HepG2 (cell line): ENCODE measurements at regions of chr5 and their contacts with region 1.

Region 1: DNA sequence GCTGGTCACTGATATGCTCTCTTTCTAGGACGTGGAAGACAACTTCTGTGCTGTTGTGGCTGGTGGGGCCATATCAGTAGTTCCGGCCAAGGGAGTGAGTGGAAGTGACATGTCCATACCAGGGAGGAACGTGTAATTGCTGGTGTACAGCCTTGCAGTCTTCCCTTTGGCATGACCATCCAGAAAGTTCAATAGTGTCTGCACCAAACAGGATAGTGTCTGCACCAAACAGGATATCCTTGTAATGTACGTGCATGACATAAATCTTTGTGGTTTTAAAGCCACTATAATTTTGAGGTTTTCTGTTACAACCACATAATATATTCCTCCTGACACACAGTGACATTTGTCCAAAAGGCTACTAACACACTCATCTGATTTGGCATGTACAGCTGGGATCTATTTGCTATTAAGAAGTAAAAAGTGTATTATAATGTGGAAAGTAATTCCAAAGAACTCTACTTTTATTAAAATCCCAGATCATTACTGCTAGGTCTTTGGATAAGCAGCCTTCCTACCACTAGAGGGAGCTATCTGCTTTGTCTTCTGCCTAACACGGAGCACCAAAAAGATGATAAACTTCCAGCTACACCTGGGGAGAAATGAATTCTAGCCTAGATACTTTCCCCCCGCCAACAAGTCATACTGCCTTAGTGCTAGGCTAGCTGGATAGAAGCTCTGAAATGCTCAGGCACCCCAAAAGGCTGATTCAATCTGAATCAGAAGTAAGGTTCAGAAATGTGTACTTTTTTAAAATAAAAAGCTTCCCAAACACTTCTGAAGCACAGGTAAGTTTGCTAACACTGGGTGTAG is 52.7 kb downstream of the RNF145 start:
- DNase-seq: peak; percentile 64
- ATAC-seq: peak; percentile 91
- H3K4me3 ChIP-seq: no peak overlapping the region
- H3K27ac ChIP-seq: no peak overlapping the region
- H3K4me1 ChIP-seq: no peaks in the 10 kb centered on the region
- H3K27me3 ChIP-seq: no peaks in the 10 kb centered on the region; a peak in 1 of 5 replicates
- CTCF ChIP-seq: peak; percentile 81
- EP300 ChIP-seq: no peak
- POLR2A ChIP-seq: no peak
- RAD21 ChIP-seq: peak; percentile 70

Region 2: DNA sequence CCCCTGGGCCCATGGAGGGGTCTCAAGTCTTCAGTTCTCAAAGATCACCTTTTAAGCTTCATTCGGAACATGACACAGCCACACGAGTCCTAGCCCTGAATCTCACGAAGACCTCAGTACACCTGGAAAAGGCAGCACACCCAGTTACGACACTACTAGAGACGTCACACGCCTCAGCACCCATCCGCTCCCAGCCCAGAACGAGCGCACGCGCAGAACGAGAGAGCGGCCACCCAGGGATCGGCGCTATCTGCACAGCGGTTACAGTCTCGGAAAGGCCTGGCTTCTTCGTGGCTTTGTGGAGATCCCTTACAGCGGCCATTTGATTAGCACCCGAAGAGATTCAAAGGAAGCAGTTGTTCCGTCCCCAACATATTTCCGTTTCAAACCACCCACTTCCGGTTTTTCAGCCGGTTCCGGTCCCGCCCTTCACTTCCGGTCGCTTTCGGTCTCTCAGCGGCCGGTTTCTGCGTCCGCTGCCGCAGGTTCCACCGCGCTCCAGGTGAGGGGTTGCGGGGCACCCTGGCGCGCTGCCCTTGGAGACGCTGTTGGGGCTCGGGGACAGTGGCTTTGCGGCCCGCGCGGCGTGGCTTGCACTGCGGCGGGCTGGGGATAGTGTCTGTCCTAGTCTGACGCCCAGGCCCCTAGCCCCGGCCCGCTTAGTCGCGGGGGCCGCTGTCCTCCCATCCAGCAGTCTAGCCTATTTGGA is 106.4 kb after region 1 on chr5 and contains the start of gene UBLCP1:
- CTCF ChIA-PET with region 1: no interaction called
- POLR2A ChIA-PET with region 1: no interaction called
- in situ Hi-C with region 1: no loop called
- intact Hi-C with region 1: loop called (anchors 2 kb)
- DNase-seq: peak; percentile 76
- ATAC-seq: peak; percentile 96
- H3K4me3 ChIP-seq: peak within 1 kb of the TSS; percentile 94 to 98 (median 97)
- H3K27ac ChIP-seq: peak within 1 kb of the TSS; percentile 79
- H3K4me1 ChIP-seq: peaks cover 26% of the 10 kb centered on the region
- H3K27me3 ChIP-seq: no peaks in the 10 kb centered on the region; a peak in 1 of 5 replicates
- CTCF ChIP-seq: no peak
- EP300 ChIP-seq: no peak
- POLR2A ChIP-seq: peak; percentile 77 to 78; a peak in 3 of 4 replicates
- RAD21 ChIP-seq: peak; percentile 10; the same call in 1 of the 2 replicates
- total RNA-seq, gene UBLCP1: 12.6 and 20.2 TPM in 2 replicates

Region 3: DNA sequence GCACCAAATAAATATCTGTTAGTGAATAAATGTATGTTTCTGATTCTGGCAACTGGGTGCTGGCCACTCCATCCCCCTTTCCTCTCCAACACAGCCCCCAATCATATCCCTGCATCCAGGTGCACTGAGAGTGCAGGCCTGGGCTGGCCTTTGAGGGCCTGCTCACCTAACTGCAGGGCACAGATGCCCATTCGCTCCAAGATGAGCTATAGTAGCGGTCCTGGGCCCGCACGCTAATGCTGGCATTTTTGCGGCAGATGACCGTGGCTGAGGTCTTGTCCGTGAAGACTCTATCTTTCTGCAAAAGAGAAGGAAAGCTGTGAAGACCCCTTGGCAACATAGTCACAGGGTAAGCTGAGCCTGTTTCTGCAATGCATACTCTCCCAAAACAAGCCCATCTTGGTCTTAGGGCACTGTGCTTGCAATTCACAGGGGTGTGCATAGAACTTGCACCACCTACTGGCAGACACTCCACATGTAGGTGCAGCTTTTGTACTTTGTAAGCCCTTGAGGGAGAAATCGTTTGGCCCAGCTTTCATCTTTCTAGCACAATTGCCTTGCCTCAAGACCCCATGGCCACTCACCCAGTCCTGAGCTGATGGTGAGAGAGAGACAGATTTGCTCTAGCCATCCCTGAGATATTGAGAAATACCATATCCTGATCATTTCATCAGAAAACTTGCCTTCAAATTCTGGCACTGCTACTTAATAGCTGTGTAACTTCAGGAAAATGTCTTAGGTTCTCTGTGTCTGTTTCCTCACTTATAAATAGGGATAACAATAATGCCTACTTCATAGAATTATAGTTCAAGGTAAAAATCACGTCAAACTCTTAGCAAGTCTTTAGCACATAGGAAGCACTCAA is 160.1 kb after region 1 on chr5:
- CTCF ChIA-PET with region 1: interaction called, 27 read pairs
- POLR2A ChIA-PET with region 1: interaction called, 3 read pairs
- in situ Hi-C with region 1: loop called (anchors 5 kb)
- intact Hi-C with region 1: loop called (anchors 1 kb)
- DNase-seq: peak; percentile 40
- ATAC-seq: peak; percentile 93
- H3K4me3 ChIP-seq: no peak overlapping the region
- H3K27ac ChIP-seq: no peak overlapping the region
- H3K4me1 ChIP-seq: no peaks in the 10 kb centered on the region
- H3K27me3 ChIP-seq: peaks cover 0 to 7% of the 10 kb centered on the region in 2 experiments; a peak in 3 of 5 replicates
- CTCF ChIP-seq: peak; percentile 84
- EP300 ChIP-seq: no peak
- POLR2A ChIP-seq: no peak
- RAD21 ChIP-seq: no peak; the same call in 1 of the 2 replicates

Region 4: GRCh38 chr5:159444441-159445082 is 287.9 kb after region 1 on chr5:
- CTCF ChIA-PET with region 1: no interaction called
- POLR2A ChIA-PET with region 1: no interaction called
- in situ Hi-C with region 1: no loop called
- intact Hi-C with region 1: loop called (anchors 5 kb)
- DNase-seq: peak; percentile 48
- ATAC-seq: peak; percentile 69
- H3K4me3 ChIP-seq: no peak overlapping the region
- H3K27ac ChIP-seq: no peak overlapping the region
- H3K4me1 ChIP-seq: no peaks in the 10 kb centered on the region
- H3K27me3 ChIP-seq: peaks cover 0 to 11% of the 10 kb centered on the region in 2 experiments; a peak in 1 of 5 replicates
- CTCF ChIP-seq: peak; percentile 71
- EP300 ChIP-seq: no peak
- POLR2A ChIP-seq: no peak
- RAD21 ChIP-seq: peak; percentile 40; the same call in 1 of the 2 replicates